ENCODE measurements at regions of chr10 and their contacts with region 1.

Region 1: GRCh38 chr10:49177391-49178355 is 10.5 kb downstream of the TMEM273 start:
- DNase-seq: peak; percentile 87
- CTCF ChIP-seq: no peak

Region 2: DNA sequence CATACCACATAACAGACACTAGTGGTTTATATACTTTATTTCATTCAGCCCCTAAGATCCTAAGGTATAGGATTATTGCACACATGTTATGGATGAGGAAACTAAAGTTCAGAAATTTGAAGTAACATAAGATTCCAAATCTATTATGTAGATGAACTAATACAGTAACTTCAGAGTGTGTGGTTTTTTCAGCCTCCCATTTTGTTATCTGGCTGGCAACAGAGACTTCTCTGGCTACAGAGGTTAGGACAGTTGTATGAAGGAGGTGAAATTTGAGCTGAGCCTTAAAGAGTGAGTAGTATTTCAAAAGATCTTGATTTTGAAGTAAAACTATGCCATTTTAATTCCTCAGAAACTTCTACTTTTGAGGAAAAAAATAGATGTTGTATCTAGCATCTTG is 745.8 kb before region 1 on chr10:
- CTCF ChIA-PET with region 1: no interaction called
- POLR2A ChIA-PET with region 1: no interaction called
- DNase-seq: no peak
- CTCF ChIP-seq: no peak

Region 3: DNA sequence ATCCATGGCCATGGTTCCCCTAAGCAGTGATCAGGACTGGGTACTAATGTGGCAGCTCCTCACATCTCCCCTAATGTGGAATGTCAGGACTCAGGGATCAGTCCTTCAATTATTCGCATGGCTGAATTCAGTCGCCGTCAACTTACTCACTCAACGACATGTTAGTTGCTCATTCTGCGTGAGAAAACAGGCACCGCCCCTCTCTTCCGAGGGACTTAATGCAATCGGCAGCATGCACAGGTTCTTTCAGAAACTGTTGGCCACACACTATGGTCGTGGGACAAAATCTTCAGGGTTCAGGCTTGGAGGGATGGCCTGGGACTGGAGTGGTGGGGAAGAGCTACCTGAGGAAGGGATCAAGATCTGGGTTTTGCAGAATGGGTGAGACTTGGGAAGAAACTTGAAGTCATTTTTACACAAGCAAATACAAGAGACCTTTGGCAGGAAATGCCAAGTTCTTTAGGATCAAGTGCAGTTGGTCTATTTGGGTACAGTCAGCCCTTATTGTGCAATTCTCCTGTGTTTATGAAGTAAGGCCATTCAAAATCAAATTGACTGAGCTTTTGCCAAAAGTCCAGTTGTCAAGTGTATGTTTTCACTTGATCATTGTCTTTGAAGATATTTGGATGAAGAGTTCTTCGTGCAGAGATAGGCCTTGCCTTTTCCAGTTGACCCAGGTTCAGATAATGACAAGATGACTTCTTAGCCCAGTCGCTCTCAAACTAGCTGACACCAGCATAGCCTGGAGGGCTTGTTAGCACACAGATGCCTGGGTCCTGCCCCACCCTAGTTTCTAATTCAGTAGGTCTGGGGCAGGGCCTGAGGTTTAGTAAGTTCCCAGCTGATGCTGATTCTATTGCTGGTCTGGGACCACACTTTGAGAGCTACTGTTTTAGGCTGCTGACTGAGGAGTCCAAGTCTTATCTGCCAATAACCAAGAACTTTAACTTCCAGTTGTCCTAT is 286.5 kb before region 1 on chr10:
- CTCF ChIA-PET with region 1: no interaction called
- POLR2A ChIA-PET with region 1: no interaction called
- DNase-seq: no peak
- CTCF ChIP-seq: no peak

Region 4: DNA sequence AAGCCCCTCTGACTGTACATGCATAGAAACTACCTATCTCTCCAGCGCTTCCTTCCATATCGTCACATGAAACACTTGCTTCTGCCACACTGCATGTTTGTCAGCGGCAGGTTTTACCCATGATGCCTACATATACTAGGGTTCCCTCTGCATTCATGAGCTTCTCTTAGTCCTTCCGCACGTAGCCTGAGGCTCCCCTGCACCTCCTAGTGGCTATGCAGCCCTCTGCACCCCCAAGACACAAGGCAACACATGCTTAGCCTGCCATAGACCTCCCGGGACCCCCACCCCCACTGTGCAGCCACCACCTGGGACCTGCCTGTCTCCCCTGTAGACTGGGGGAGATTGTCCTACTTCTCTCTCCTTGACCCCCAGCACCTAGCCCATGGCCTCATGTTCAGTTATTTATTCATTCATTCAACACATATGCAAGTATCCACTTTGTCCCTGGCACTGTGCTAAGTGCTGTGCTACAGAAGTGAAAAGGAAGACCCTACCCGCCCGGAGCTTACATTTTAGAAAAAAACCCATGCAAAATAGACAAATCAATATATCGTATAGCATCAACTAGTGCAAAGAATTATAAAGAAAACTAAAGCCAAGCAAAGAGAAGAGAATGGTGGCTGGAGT is 13.0 kb before region 1 on chr10:
- CTCF ChIA-PET with region 1: interaction called, 28 read pairs
- POLR2A ChIA-PET with region 1: no interaction called
- DNase-seq: peak; percentile 58
- CTCF ChIP-seq: peak; percentile 65

Region 5: GRCh38 chr10:49187950-49188761 is 10.5 kb after region 1 on chr10 and contains the start of gene TMEM273:
- CTCF ChIA-PET with region 1: interaction called, 17 read pairs
- POLR2A ChIA-PET with region 1: interaction called, 7 read pairs
- DNase-seq: peak; percentile 72
- CTCF ChIP-seq: no peak

Measured in GM10248 (cell line).